ENCODE measurements at regions of chr17 and their contacts with region 1.

Region 1: GRCh38 chr17:4939796-4940624 is at the starts of genes RNF167 and SLC25A11:
- DNase-seq: peak; percentile 100
- H3K4me3 ChIP-seq: peak within 1 kb of the TSS; percentile 95
- H3K27ac ChIP-seq: peak within 1 kb of the TSS; percentile 90
- H3K4me1 ChIP-seq: peaks cover 49% of the 10 kb centered on the region
- CTCF ChIP-seq: no peak
- total RNA-seq, gene RNF167: 31.4 and 46.5 TPM in 2 replicates
- total RNA-seq, gene SLC25A11: 59.6 and 80.6 TPM in 2 replicates

Region 2: DNA sequence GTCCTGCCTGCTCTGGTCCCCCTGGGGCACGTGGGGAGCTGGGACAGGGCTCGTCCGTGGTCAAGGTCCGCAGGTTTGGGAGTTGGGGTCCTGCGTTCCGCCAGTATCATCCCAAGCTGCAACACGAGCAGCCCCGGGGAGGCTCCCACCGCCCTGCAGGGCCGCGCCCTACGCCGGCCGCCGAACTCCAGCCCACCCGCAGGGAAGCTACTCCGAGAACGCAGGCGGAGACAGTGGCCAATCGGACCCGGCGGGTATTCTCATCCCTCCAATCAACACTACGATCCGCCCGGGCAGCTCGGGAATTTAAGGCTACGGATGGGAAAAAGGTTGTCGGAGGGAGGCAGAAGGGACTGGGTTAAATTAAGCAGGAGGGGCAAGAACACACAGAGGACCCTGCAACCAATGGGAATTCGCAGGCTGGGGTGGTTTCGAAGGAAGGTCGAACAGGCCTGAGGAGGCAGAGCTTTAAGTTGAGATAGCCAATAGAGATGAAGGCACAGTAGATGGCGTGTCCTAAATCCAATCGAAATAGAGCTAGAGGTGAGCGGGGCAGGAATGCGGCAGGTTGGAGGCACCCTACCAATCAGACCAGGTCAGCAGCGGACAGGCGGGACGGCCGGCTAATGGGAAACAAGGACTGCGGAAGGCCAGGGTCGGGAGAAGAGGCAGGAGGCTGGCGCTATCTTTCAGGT is 27.0 kb after region 1 on chr17:
- CTCF ChIA-PET with region 1: no interaction called
- POLR2A ChIA-PET with region 1: interaction called, 20 read pairs
- intact Hi-C with region 1: no loop called
- DNase-seq: peak; percentile 98
- H3K4me3 ChIP-seq: peak overlapping the region; percentile 78
- H3K27ac ChIP-seq: peak overlapping the region; percentile 77
- H3K4me1 ChIP-seq: peaks cover 23% of the 10 kb centered on the region
- CTCF ChIP-seq: no peak

Region 3: DNA sequence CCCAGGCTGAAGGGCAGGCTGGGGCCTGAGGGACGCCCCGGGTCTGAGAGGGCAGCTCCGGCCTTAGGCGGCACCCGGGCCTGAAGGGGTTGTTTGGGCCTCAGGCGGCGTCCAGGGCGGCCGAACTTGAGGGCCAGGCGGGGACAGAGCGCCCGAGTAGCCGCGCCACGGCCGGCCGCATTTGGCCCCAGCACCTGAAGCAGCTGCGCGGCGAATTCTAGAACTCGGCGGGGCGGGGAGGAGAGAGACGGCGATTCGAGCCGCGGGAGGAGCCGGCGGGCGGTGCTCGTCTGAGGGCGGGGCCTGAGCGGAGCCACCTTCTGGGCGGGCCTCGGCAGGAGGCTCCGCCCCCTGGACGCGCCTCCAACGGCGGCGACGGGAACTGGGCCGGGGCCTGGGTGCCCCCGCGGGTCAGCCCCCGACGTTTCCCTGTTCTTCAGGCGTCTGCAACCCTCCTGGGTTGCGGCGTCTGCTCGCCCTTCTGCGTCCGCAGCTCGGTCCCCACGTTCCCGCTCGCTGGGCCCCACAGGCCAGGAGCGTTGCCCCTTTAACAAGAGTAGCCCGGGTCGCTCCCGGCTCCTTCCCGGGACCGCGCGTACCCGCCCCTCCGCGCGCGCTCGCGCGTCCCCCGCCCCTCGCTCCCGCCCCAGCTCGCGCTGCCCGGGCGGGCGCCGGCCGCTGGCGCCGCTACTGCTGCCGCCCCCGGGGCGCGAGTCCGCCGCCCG is 57.5 kb after region 1 on chr17 and contains the starts of genes INCA1 and KIF1C:
- CTCF ChIA-PET with region 1: no interaction called
- POLR2A ChIA-PET with region 1: no interaction called
- intact Hi-C with region 1: no loop called
- DNase-seq: peak; percentile 95
- H3K4me3 ChIP-seq: peak within 1 kb of the TSS; percentile 93
- H3K27ac ChIP-seq: peak within 1 kb of the TSS; percentile 48
- H3K4me1 ChIP-seq: peaks cover 20% of the 10 kb centered on the region
- CTCF ChIP-seq: no peak
- total RNA-seq, gene INCA1: not detected in 2 replicates
- total RNA-seq, gene KIF1C: 20.6 and 32.1 TPM in 2 replicates

Region 4: GRCh38 chr17:5191541-5192417 is 251.8 kb after region 1 on chr17 and contains the start of gene ZNF594:
- CTCF ChIA-PET with region 1: no interaction called
- POLR2A ChIA-PET with region 1: no interaction called
- intact Hi-C with region 1: loop called (anchors 10 kb)
- DNase-seq: peak; percentile 97
- H3K4me3 ChIP-seq: peak within 1 kb of the TSS; percentile 97
- H3K27ac ChIP-seq: peak within 1 kb of the TSS; percentile 46
- H3K4me1 ChIP-seq: peaks cover 24% of the 10 kb centered on the region
- CTCF ChIP-seq: peak; percentile 86
- total RNA-seq, gene ZNF594: 42.5 and 43.4 TPM in 2 replicates